ENCODE measurements at regions of chr1 and their contacts with region 1.

Region 1: DNA sequence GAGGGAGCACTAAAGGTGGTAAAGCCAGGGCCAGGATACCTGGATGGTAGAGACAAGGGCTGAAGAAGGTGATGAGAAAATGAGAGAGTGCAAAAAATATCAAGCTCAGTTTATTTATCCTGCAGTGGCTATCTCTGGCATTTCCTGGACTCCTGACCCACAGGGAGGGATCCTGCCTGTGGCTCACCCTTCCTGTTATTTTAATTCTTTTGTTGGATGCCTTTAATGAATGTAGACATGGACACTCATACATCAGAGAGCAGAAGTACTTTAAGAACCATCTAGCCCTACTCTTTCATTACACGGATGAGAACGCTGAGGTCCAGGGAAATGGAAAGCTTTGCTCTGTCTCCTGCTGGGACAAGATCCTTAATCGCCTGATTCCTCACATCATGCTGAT is 20.6 kb downstream of the JUN start:
- DNase-seq: peak; percentile 54
- H3K4me3 Mint-ChIP-seq: no peak overlapping the region
- H3K27ac Mint-ChIP-seq: peak overlapping the region; percentile 5
- H3K4me1 Mint-ChIP-seq: peaks cover 26% of the 10 kb centered on the region
- H3K27me3 Mint-ChIP-seq: no peaks in the 10 kb centered on the region
- CTCF ChIP-seq: no peak

Region 2: DNA sequence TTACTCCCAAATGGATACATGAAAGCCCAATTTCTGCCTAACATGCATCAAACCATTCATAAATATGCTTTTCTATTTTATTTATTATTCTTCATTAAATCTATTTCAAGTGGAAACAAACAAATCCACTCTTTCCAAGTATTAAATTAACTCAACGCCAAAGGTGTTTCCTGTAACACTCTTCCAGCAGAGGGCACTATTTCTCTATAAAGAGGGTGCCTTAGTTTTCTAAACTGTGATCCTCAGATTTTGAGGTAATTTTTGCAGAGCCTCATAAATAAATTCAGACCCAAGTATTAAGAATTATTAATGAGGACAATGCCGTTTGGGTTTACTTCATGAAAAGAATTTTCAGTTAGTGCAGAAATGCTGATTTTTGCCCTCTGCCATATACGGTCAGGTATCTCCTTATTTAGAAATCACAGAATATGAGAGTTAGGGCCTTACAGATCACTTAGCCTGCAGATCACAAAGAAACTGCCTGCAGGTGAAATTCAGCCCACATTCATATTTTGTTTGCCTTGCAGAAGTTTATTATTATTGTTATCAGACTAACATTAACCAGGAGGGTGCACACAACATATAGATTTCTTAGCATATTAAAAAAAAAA is 23.3 kb before region 1 on chr1:
- CTCF ChIA-PET with region 1: interaction called, 33 read pairs
- POLR2A ChIA-PET with region 1: interaction called, 3 read pairs
- intact Hi-C with region 1: no loop called
- DNase-seq: peak; percentile 69
- H3K4me3 Mint-ChIP-seq: no peak overlapping the region
- H3K27ac Mint-ChIP-seq: no peak overlapping the region
- H3K4me1 Mint-ChIP-seq: peaks cover 6% of the 10 kb centered on the region
- H3K27me3 Mint-ChIP-seq: no peaks in the 10 kb centered on the region
- CTCF ChIP-seq: peak; percentile 54

Measured in MCF 10A (cell line).